ENCODE measurements at regions of chr20 and their contacts with region 1.

Region 1: DNA sequence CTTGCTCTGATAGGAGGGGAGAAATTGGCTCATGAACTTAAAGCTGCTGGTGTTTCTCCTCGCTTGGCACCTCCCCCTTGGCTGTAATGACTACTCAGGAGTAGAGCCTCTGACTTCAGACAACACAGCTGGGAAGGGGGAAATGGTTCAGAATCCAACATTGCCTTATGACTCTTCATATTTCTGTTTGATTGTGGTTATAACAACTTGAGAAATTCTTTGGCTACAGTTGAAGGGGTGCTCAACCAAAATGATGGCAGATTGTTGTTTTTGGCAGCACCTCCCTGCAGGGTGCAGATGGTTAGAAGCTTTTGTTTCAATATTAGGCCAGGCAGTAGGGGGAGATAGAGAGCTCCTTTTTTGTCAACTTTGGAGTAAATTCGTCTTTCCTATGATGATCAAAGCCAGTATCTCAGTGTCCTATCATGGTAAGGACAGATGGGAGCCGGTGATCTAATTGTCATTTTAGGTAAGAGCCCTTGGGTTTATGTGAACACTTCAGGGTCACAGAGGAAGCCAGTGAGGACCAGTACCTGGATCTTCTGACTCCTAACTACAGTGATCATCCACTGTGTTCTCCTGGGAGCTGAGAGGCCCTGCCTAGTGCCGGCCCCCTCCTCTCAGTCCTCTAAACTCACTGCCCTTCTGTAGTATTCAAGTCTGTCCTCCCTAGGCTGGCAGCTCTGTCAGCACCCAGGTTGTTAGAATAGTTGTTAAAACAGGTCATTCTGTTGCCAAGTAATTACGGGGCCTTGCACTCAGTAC is 39.9 kb downstream of the RPRD1B start:
- DNase-seq: peak; percentile 37 to 44 (median 38)
- H3K4me3 ChIP-seq: no peak overlapping the region
- H3K4me3 Mint-ChIP-seq: no peak overlapping the region
- H3K27ac ChIP-seq: no peak overlapping the region
- H3K27ac Mint-ChIP-seq: peak overlapping the region in 2 of 7 donors; percentile 28 to 84
- H3K4me1 ChIP-seq: no peaks in the 10 kb centered on the region
- H3K4me1 Mint-ChIP-seq: peaks cover 2% of the 10 kb centered on the region
- H3K27me3 ChIP-seq: no peaks in the 10 kb centered on the region
- H3K27me3 Mint-ChIP-seq: no peaks in the 10 kb centered on the region
- CTCF ChIP-seq: peak; percentile 86

Region 2: DNA sequence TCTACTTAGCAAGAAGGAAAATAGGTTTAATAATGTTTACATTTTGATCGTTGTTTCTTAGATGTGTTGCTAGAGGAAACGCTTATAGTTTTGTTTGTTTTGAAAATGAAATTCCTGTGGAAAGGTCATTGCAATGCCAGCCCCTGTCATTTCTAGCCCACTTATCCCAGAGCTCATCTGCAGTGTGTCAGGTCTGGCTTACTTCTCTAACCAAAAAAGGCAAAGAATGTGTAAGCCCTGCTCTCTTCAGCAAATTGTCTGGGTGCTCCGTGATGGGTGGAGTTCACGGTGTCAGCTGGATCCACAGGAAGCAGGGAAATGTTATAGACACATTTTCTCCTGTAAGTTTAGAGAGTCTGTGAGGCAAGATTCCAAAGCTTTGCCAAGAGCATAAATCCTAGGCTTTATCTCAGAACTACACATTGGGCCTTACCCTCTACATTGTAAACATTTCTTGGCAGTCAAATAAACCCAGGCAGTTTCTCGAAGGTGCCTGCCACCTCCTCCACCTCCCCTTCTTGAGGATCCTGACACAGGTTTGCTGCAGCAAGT is 11.0 kb after region 1 on chr20:
- intact Hi-C with region 1: no loop called
- DNase-seq: no peak
- H3K4me3 ChIP-seq: no peak overlapping the region
- H3K4me3 Mint-ChIP-seq: no peak overlapping the region
- H3K27ac ChIP-seq: peak overlapping the region in 1 of 2 donors; percentile 26
- H3K27ac Mint-ChIP-seq: peak overlapping the region in 1 of 7 donors; percentile 48
- H3K4me1 ChIP-seq: no peaks in the 10 kb centered on the region
- H3K4me1 Mint-ChIP-seq: no peaks in the 10 kb centered on the region
- H3K27me3 ChIP-seq: no peaks in the 10 kb centered on the region
- H3K27me3 Mint-ChIP-seq: peaks cover 0 to 2% (median 0%) of the 10 kb centered on the region in 3 donors
- CTCF ChIP-seq: no peak

Region 3: DNA sequence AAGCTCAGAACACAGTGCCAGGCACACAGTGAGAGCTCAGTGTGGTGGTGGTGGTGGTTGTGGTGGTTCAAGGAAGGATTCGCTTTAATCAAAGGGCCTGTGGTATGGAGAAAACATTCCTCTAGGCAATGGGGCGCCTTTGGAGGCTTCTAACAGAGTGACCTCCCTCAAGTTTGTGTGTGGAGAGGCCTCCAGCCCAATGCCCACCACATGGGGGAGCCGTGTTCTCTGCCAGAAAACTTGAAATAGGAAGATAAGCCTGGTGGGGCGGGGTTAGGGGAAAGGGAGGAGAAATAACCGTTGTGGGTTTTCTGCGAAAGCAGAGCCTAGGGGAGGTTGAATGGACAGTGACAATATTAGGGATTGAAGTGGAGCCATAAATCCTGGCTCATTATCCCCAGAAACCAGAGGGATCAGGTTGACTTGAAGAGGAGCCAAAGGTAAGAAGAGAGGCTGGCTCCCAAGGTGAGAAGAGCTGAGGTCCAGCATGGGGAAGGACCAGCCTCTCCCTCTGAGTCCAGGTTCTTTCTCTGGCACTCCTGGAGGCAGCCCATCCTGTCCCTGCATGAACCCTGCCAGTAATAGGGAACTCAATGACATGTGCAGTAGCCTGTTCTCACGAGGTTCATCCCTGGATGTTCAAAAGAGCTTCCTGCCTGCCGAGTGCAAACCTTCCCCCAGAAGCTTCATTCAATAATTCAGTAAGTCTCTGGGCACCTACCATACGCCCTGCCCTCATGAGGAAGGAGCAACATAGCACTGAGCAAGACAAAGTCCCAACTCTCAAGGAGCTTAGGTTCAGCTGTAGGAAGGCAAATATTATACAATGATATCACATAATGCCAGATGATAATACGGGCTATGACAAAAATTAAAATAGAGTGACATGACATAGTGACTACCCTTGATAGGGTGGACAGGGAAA is 40.2 kb after region 1 on chr20:
- intact Hi-C with region 1: loop called in 1 of 2 experiments (anchors 5 kb)
- DNase-seq: peak; percentile 56 to 60 (median 60)
- H3K4me3 ChIP-seq: no peak overlapping the region
- H3K4me3 Mint-ChIP-seq: peak overlapping the region; percentile 13 to 70
- H3K27ac ChIP-seq: no peak overlapping the region
- H3K27ac Mint-ChIP-seq: peak overlapping the region in 6 of 7 donors; percentile 4 to 78 (median 51)
- H3K4me1 ChIP-seq: peaks cover 13 to 18% of the 10 kb centered on the region in 2 donors
- H3K4me1 Mint-ChIP-seq: peaks cover 49% of the 10 kb centered on the region
- H3K27me3 ChIP-seq: no peaks in the 10 kb centered on the region
- H3K27me3 Mint-ChIP-seq: no peaks in the 10 kb centered on the region
- CTCF ChIP-seq: peak; percentile 55

Region 4: DNA sequence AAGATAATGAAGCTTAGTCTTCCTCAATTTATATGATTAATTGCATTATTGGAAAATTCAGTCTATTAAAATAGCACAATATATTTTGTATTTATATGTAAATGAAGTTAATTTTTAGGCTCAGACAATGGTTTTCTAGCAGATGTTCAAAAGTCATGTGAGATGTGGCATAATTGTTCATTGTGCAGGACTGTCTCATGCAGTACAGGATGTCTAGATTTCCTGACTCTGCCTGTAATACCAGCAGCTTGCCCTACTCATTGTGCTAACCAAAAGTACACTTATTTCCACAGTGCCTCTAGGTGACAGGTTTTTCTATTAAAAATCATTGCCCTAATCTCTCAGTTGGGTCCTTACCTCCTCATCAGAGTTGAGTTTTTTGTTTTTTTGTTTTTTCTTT is 411.6 kb after region 1 on chr20:
- intact Hi-C with region 1: no loop called
- DNase-seq: no peak
- H3K4me3 ChIP-seq: no peak overlapping the region
- H3K4me3 Mint-ChIP-seq: no peak overlapping the region
- H3K27ac ChIP-seq: no peak overlapping the region
- H3K27ac Mint-ChIP-seq: peak overlapping the region in 2 of 7 donors; percentile 12 to 50
- H3K4me1 ChIP-seq: no peaks in the 10 kb centered on the region
- H3K4me1 Mint-ChIP-seq: no peaks in the 10 kb centered on the region
- H3K27me3 ChIP-seq: no peaks in the 10 kb centered on the region
- H3K27me3 Mint-ChIP-seq: no peaks in the 10 kb centered on the region
- CTCF ChIP-seq: no peak

Measured in CD14-positive monocyte (primary cell).